GM10248 (cell line): ENCODE measurements at regions of chr11 and their contacts with region 1.

Region 1: GRCh38 chr11:62905927-62906531 is 15.1 kb downstream of the CHRM1 start:
- DNase-seq: peak; percentile 84
- CTCF ChIP-seq: peak; percentile 99

Region 2: DNA sequence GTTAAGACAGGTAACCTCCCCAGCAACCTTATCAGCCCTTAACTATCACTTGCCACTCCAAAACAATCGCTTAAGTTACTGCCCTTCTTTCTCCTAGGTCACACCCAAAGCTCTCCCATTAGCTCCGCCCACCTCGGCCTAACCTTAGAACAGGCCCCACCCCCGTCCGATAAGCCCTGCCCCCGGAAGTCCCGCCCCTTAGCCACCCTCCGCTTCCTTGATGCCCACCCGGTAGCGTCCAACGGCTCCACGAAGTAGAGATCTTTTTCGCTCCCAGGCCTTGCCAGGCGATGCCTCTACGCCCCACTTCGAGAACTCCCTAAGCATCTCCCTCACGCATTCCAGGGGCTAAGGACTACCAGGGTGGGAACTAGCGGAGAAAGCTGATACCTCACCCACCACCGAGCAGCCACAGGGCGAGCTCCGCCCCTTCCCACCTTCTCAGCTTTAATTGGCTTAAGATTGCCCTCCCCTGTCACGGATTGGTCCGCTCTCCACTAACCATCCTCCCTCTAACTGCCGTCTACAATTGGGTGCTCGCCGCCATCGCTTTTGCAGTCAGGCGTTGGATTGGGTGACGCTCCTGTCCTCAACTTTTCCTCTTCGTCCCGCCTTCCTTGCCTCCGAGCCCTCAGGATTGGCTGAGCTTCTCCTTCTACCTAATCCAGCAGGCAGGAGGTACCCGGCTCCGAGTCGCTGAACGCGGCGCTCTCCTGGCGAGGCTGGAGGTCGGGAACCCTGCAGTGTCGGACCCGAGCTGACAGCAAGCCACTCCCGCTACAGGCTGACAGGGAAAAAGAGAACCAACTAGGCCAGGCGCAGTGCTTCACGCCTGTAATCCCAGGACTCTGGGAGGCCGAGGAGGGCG is 152.1 kb before region 1 on chr11 and contains the start of gene ZBTB3:
- CTCF ChIA-PET with region 1: no interaction called
- POLR2A ChIA-PET with region 1: no interaction called
- DNase-seq: peak; percentile 96
- CTCF ChIP-seq: no peak

Region 3: DNA sequence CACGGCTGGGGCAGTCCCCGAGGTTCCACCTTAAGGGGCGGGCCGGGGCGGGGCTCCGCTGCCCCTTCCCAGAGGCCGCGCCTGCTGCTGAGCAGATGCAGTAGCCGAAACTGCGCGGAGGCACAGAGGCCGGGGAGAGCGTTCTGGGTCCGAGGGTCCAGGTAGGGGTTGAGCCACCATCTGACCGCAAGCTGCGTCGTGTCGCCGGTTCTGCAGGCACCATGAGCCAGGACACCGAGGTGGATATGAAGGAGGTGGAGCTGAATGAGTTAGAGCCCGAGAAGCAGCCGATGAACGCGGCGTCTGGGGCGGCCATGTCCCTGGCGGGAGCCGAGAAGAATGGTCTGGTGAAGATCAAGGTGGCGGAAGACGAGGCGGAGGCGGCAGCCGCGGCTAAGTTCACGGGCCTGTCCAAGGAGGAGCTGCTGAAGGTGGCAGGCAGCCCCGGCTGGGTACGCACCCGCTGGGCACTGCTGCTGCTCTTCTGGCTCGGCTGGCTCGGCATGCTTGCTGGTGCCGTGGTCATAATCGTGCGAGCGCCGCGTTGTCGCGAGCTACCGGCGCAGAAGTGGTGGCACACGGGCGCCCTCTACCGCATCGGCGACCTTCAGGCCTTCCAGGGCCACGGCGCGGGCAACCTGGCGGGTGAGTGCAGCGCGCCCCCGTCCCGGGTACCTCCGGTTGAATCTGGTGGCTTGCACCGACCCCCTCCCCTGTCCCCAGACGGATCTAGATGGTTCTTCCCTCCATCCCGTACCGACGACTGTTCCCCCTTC is 25.0 kb before region 1 on chr11 and contains the start of gene SLC3A2:
- CTCF ChIA-PET with region 1: interaction called, 11 read pairs
- POLR2A ChIA-PET with region 1: no interaction called
- DNase-seq: peak; percentile 91
- CTCF ChIP-seq: peak; percentile 80

Region 4: DNA sequence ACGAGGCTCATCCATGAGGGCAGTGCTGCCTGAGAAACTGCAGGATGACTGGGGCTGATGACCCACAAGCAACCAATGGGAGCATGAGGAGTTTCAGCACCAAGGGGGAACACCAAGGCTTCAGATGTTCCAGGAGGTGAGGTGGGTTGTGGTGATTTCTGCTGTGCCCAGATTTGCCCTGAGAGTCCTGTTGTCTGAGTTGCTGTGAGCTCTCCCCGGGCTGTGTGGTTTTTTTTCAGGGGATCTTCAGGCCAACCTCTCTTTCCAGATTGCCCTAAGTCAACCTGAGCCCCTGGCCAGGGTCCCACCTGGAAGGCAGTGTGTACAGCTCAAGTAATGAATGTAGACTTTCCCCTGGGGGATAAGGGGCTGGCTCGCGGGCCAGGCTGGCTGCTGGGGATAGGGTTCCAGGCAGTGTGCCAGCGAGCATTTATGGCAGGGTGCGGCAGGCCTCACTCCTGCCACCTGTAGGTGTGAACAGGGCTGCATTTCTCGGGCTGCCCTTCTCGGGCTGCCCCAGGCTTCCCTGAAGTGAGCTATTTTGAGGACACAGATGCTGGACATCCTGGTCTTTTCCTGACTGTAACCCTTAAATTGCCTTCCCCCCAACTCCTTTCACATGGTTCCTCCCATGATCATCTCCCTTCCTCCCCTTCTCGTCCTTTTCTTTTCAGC is 69.0 kb after region 1 on chr11:
- CTCF ChIA-PET with region 1: interaction called, 46 read pairs
- POLR2A ChIA-PET with region 1: no interaction called
- DNase-seq: no peak
- CTCF ChIP-seq: peak; percentile 15

Region 5: DNA sequence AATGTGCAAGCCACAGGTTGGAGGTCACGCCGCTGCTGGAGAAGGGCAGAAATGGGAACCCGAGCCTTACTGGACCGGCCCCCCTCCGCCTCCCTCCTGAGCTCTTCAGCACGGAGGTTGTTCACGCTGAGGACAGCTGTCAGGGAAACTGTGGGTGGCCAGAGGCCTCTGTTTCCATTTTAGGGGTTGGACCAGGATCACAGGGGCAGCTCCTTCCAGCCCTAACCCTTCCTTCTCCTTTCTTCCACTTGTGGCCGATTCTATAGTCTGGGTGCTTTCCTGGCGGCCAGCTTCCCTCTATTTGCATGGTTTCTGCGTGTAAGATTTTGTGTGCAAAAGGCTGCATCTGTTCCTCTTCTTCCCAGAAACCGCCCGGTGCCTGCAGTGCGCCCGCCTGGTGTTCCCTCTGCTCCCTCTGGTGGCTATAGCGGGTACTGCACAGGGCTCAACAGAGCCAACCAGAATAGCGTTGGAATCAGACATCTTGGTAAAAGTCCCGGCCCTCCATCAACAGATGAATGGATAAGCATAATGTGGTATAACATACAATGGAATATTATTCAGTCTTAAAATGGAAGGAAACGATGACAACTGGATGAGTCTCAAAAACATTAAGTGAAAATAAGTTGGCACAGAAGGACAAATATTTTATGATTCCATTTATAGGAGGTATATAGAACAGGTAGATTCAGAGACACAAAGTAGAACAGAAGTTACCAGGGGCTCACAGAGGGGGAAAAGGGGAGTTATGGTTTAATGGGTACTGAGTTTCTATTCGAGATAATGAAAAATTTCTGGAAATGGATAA is 118.0 kb after region 1 on chr11:
- CTCF ChIA-PET with region 1: interaction called, 347 read pairs
- POLR2A ChIA-PET with region 1: no interaction called
- DNase-seq: peak; percentile 82
- CTCF ChIP-seq: peak; percentile 98

Region 6: DNA sequence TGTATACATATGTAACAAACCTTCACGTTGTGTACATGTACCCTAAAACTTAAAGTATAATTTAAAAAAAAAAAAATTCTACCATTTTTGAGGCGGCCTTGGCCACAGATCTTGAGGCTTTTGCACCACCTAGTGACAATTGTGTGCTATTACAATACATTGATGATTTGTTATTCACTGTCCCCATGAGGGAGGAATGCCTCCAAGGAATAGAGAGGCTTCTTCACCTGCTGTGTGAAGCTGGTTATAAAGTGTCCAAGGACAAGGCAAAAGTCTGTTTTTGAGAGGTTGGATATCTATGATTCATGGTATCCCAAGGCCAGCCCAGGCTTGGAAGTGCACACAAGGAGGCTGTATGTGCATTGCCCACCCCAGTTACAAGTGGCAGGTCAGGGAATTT is 306.7 kb after region 1 on chr11:
- CTCF ChIA-PET with region 1: interaction called, 17 read pairs
- POLR2A ChIA-PET with region 1: no interaction called
- DNase-seq: peak; percentile 24
- CTCF ChIP-seq: peak; percentile 33